ENCODE measurements at regions of chr9 and their contacts with region 1.

Region 1: DNA sequence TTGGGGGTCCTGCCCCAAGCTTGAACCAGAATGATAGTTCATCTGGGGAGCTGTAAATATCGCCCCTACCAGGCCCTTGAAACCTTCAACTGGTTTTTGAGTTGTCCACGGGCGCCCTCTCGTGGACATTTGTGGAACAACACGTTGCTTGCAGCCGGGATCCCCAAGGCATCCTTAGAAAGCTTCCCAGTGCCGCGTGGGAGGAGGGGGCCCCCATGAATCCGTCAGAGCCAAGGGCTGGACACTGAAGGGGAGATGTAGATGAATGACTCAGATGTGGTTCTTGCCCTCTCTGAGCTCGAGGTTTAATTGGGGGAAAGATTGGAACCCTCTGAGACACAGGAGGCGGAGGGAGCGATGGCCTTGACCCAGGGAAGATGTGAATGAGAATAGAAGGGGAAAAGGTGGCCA is 31.8 kb upstream of the ORM1 start:
- DNase-seq: peak; percentile 46 to 83 (median 59)
- ATAC-seq: peak in 3 of 4 donors; percentile 38 to 62 (median 49)
- H3K4me3 ChIP-seq: no peak overlapping the region
- H3K27ac ChIP-seq: no peak overlapping the region
- H3K4me1 ChIP-seq: no peaks in the 10 kb centered on the region
- H3K27me3 ChIP-seq: no peaks in the 10 kb centered on the region
- CTCF ChIP-seq: peak; percentile 77 to 96 (median 93)
- POLR2A ChIP-seq: no peak

Region 2: DNA sequence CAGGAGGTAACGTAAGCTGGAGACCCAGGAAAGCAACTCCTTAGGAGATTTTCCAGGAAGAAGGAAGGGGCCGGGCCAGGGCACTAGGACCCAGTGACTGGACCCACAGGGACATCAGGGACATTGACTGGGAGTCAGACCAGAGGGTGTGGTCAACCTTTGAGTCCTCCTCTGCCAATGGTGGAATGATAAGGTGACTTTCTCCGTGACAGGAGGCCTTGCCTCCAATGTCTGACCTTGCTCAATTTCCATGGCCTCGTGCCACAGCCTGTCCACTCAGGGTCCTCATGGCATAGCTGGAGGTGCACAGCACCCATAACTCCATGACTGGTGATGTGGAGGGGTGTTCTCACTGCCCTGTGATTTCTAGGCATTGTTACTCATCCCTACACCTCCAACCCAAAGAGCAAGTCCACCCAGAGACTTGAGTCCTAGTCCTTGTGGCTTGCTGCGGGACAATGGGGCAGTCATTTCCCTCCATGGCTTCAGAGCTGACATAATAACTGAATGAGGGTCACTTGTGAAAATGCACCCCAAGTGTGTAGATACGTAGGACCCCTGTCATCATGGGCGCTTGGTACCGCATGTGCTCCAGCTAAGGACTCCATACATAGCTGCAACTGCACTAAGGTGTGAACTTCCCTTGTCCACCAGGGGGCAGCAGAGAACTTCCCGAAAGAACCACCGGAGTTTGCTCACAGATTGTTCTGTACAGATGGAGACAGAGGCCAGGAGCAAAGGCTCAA is 208.9 kb before region 1 on chr9:
- intact Hi-C with region 1: loop called (anchors 1 to 5 kb)
- DNase-seq: peak; percentile 75 to 87 (median 84)
- ATAC-seq: peak; percentile 75 to 95 (median 90)
- H3K4me3 ChIP-seq: no peak overlapping the region
- H3K27ac ChIP-seq: no peak overlapping the region
- H3K4me1 ChIP-seq: peaks cover 0 to 5% (median 0%) of the 10 kb centered on the region in 12 donors
- H3K27me3 ChIP-seq: peaks cover 0 to 11% (median 0%) of the 10 kb centered on the region in 9 donors
- CTCF ChIP-seq: peak; percentile 83 to 95 (median 90)
- POLR2A ChIP-seq: no peak

Region 3: GRCh38 chr9:114180696-114181606 is 110.1 kb before region 1 on chr9:
- intact Hi-C with region 1: no loop called
- DNase-seq: peak in 4 of 5 donors; percentile 45 to 60 (median 53)
- ATAC-seq: peak in 3 of 4 donors; percentile 27 to 48 (median 30)
- H3K4me3 ChIP-seq: peak overlapping the region in 2 of 12 donors; percentile 2 to 20
- H3K27ac ChIP-seq: peak overlapping the region in 11 of 12 donors; percentile 40 to 83 (median 71)
- H3K4me1 ChIP-seq: peaks cover 3 to 77% (median 53%) of the 10 kb centered on the region in 12 donors
- H3K27me3 ChIP-seq: no peaks in the 10 kb centered on the region
- CTCF ChIP-seq: no peak
- POLR2A ChIP-seq: no peak

Region 4: DNA sequence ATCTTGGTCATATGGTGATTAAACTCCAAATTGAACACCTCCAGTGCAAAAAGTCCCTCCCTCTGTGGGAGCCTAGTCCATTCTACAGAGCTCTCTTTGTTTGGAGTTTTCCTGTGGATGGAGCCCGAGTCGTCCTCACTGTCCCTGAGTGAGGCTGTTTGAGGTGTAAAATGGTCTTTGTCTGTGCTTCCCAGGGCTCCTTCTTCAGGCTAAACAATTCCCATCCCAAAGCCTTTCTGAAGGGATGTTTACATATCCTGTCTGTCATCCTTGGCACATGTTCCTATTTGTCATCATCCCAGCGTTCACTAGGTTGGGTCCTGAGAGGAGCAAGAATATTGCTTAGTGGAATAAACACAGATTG is 66.8 kb before region 1 on chr9:
- intact Hi-C with region 1: no loop called
- DNase-seq: no peak
- ATAC-seq: peak in 2 of 4 donors; percentile 27 to 65
- H3K4me3 ChIP-seq: no peak overlapping the region
- H3K27ac ChIP-seq: peak overlapping the region in 1 of 12 donors; percentile 49
- H3K4me1 ChIP-seq: peaks cover 0 to 17% (median 4%) of the 10 kb centered on the region in 12 donors
- H3K27me3 ChIP-seq: no peaks in the 10 kb centered on the region
- CTCF ChIP-seq: no peak
- POLR2A ChIP-seq: no peak

Region 5: GRCh38 chr9:114405294-114406034 is 114.4 kb after region 1 on chr9:
- intact Hi-C with region 1: no loop called
- DNase-seq: peak; percentile 73 to 81 (median 79)
- ATAC-seq: peak; percentile 76 to 95 (median 92)
- H3K4me3 ChIP-seq: no peak overlapping the region
- H3K27ac ChIP-seq: no peak overlapping the region
- H3K4me1 ChIP-seq: peaks cover 0 to 7% (median 0%) of the 10 kb centered on the region in 12 donors
- H3K27me3 ChIP-seq: no peaks in the 10 kb centered on the region
- CTCF ChIP-seq: peak; percentile 72 to 87 (median 82)
- POLR2A ChIP-seq: no peak